A673 (cell line): ENCODE measurements at regions of chr6 and their contacts with region 1.

Region 1: GRCh38 chr6:56542364-56543331 is 100.0 kb downstream of the DST start:
- DNase-seq: peak; percentile 95
- H3K4me3 ChIP-seq: peak overlapping the region; percentile 61
- H3K27ac ChIP-seq: peak overlapping the region; percentile 87
- H3K4me1 ChIP-seq: peaks cover 35% of the 10 kb centered on the region
- H3K27me3 ChIP-seq: no peaks in the 10 kb centered on the region
- CTCF ChIP-seq: peak; percentile 38

Region 2: GRCh38 chr6:56521454-56521853 is 21.2 kb before region 1 on chr6:
- CTCF ChIA-PET with region 1: interaction called, 10 read pairs
- POLR2A ChIA-PET with region 1: no interaction called
- intact Hi-C with region 1: no loop called
- DNase-seq: no peak
- H3K4me3 ChIP-seq: no peak overlapping the region
- H3K27ac ChIP-seq: no peak overlapping the region
- H3K4me1 ChIP-seq: peaks cover 27% of the 10 kb centered on the region
- H3K27me3 ChIP-seq: no peaks in the 10 kb centered on the region
- CTCF ChIP-seq: no peak